ENCODE measurements at regions of chr12 and their contacts with region 1.

Region 1: DNA sequence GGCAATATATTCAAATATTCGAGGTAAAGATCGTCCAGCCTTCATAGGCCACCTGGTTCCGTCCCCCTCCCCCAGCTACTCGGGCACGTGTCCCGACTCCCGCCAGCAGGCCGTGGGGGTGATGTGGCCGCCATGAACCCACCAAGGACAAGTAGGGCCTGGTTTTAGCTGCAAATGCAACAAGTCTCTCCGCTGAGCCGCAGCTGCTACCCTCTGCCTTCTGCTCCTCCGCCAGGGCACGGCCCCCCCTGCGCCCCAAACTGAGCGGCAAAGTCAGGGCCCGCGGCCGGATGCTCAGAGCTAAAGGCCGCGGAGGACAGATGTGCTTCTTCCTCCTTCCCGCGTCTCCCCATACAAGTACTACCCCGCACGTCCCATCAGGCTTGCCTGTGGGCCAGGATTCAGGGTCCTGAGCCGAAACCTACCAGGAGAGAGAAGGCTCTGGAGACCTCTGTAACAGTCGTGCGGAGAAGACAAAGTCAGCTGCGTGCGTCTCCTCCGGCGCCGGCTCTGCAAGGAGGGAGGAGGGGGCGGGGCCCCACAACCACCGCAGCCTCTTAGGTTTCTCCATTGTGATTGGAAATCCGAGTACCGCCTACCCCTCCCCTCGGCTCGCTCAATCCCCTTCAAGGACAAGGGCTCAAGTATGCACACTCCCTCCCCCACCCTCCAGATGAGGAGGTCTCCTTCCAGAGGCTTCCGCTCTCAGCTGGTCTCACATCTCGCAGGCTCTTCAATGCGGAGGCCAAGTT is at the start of gene LDHB:
- DNase-seq: peak; percentile 90
- H3K4me3 Mint-ChIP-seq: peak within 1 kb of the TSS; percentile 95
- H3K27ac Mint-ChIP-seq: peak within 1 kb of the TSS; percentile 100
- H3K4me1 Mint-ChIP-seq: peaks cover 48% of the 10 kb centered on the region
- H3K27me3 Mint-ChIP-seq: peaks cover 2% of the 10 kb centered on the region
- total RNA-seq, gene LDHB: 1,359 and 1,451 TPM in 2 replicates

Region 2: DNA sequence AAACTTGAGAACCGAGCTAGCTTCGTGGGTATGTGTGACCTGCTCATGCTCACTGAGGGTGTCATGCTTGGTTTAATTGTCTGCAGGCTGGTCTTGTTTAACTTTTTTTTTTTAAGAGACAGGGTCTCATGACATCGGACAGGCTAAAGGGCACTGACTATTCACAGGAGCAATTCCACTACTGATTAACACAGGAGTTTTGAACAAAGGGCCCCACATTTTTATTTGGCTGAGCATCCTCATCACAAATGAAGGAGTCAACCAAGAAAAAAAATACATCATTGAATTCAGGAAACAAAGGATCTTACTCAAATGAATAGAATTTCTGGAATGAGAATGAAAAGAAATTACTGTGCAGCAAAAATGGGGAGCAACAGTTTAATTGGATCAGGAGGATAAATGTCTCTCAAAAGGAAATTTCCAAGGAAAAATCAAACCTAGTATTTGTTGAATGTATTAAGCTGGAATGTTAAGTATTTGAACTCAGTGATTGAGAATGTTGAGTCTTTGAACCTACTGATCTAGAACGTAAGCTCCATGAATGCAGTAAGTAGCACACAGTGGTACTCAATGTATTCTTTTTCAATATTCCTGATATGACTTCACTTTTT is 240.9 kb before region 1 on chr12:
- intact Hi-C with region 1: no loop called
- DNase-seq: no peak
- H3K4me3 Mint-ChIP-seq: no peak overlapping the region
- H3K27ac Mint-ChIP-seq: no peak overlapping the region
- H3K4me1 Mint-ChIP-seq: no peaks in the 10 kb centered on the region
- H3K27me3 Mint-ChIP-seq: peaks cover 21% of the 10 kb centered on the region

Region 3: DNA sequence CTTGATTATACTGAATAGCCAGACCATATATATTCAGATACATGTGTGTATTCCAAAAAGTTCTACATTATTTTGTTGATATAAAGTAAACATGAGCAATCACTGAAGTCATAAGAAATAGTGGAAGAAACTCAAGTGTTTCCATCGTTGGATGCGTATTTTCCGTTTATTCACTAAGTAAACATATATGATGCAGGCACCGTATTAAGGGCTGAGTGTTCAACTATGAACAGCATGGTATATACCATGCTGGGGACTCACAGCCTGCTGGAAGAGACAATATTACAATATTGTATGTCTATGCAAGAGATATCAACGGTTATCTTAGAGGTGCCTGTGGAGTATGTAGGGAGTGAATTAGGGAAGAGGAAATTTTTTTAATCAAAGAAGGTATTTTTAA is 218.9 kb before region 1 on chr12:
- intact Hi-C with region 1: loop called (anchors 1 kb)
- DNase-seq: no peak
- H3K4me3 Mint-ChIP-seq: peak overlapping the region; percentile 95
- H3K27ac Mint-ChIP-seq: peak overlapping the region; percentile 95
- H3K4me1 Mint-ChIP-seq: peaks cover 41% of the 10 kb centered on the region
- H3K27me3 Mint-ChIP-seq: peaks cover 5% of the 10 kb centered on the region

Region 4: DNA sequence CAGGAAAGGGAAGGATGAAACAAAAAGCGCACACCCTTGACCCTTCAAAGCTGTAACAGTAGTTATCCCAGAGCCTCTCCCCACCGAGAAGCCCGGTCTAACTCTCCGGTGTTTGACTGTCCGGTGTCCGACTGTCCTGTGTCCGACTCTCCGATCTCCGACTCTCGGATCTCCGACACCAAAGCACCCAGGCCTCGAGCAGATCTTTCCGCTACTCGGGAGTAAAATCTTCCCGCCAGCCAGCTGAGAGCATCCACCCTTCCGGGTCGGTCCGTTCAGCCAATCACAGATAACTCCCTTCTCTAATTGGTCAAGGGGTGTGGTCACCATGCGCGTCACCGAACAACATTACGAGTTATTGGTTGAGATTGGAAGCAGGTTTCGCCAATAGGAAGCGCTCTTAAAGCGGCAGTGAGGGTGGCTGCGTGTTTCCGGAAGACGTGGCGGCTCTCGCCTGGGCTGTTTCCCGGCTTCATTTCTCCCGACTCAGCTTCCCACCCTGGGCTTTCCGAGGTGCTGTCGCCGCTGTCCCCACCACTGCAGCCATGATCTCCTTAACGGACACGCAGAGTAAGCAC is 156.0 kb before region 1 on chr12 and contains the starts of genes GOLT1B and RECQL:
- intact Hi-C with region 1: loop called (anchors 1 kb)
- DNase-seq: peak; percentile 90
- H3K4me3 Mint-ChIP-seq: no peak within 1 kb of the TSS
- H3K27ac Mint-ChIP-seq: peak within 1 kb of the TSS; percentile 8
- H3K4me1 Mint-ChIP-seq: peaks cover 49% of the 10 kb centered on the region
- H3K27me3 Mint-ChIP-seq: no peaks in the 10 kb centered on the region
- total RNA-seq, gene GOLT1B: 42.6 and 46.5 TPM in 2 replicates
- total RNA-seq, gene RECQL: 56.4 and 60.6 TPM in 2 replicates

Region 5: GRCh38 chr12:21615431-21615830 is 42.1 kb before region 1 on chr12:
- intact Hi-C with region 1: loop called (anchors 1 kb)
- DNase-seq: no peak
- H3K4me3 Mint-ChIP-seq: peak overlapping the region; percentile 46
- H3K27ac Mint-ChIP-seq: peak overlapping the region; percentile 45
- H3K4me1 Mint-ChIP-seq: peaks cover 46% of the 10 kb centered on the region
- H3K27me3 Mint-ChIP-seq: peaks cover 2% of the 10 kb centered on the region

Region 6: GRCh38 chr12:21677622-21678277 is 20.2 kb after region 1 on chr12:
- intact Hi-C with region 1: loop called (anchors 1 kb)
- DNase-seq: no peak
- H3K4me3 Mint-ChIP-seq: no peak overlapping the region
- H3K27ac Mint-ChIP-seq: no peak overlapping the region
- H3K4me1 Mint-ChIP-seq: peaks cover 28% of the 10 kb centered on the region
- H3K27me3 Mint-ChIP-seq: peaks cover 8% of the 10 kb centered on the region

Region 7: DNA sequence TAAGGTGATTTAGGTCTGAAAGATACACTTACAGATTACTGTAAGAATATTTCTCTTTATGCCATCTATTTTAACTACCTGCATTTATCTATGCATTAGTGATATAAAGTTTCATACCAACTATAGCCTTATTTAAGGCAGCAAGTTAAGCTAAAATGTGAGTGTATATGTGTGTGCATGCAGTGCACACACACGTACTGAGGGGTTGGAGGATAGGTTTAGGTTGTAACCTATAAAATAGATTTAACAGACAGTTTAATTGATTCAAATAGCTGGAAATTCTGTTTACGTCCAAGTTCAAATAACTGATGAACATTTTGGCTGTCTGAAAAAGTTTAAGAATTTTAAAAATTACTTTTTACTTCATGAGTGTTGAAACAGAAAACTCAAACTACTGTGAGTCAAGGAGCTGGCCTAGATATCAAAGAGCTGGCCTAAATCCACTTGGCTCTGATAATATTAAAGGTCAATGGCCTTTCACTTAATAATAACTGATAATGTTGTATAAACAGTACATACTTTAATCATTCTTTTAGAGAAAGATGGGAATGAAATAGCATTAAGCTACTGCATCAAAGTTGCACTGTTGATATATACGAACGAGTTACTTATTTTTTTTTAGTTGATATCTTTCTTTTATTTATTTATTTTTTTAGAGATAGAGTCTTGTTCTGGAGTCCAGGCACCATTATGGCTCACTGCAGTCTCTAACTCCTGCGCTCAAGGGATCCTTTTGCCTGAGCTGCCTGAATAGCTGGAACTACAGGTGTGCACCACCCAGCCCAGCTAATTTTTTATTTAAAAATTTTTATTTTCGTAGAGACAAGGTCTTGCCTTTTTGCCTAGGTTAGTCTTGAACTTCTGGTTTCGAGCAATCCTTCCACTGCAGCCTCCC is 130.8 kb after region 1 on chr12:
- intact Hi-C with region 1: no loop called
- DNase-seq: no peak
- H3K4me3 Mint-ChIP-seq: no peak overlapping the region
- H3K27ac Mint-ChIP-seq: no peak overlapping the region
- H3K4me1 Mint-ChIP-seq: no peaks in the 10 kb centered on the region
- H3K27me3 Mint-ChIP-seq: peaks cover 2% of the 10 kb centered on the region

Region 8: GRCh38 chr12:22544038-22544979 is 886.8 kb after region 1 on chr12 and contains the start of gene C2CD5:
- intact Hi-C with region 1: loop called (anchors 5 kb)
- DNase-seq: peak; percentile 92
- H3K4me3 Mint-ChIP-seq: peak within 1 kb of the TSS; percentile 94
- H3K27ac Mint-ChIP-seq: peak within 1 kb of the TSS; percentile 96
- H3K4me1 Mint-ChIP-seq: peaks cover 35% of the 10 kb centered on the region
- H3K27me3 Mint-ChIP-seq: peaks cover 14% of the 10 kb centered on the region
- total RNA-seq, gene C2CD5: 30.0 and 35.5 TPM in 2 replicates

Measured in activated T-helper 1 cell treated with anti-CD3 and anti-CD28 coated beads, Interleukin-12 subunit alpha, Interleukin-12 subunit beta, Interleukin-2, Interleukin-4 antibody, amounts not matched to agents 30 ng/mL and 10 ng/mL and 1 ng/mL, durations not matched to agents 14 hours and 24 hours and 36 hours (primary cell).